ENCODE measurements at regions of chr2 and their contacts with region 1.

Region 1: GRCh38 chr2:203814661-203815540 is 52.7 kb upstream of the CTLA4 start:
- DNase-seq: peak; percentile 74
- H3K4me3 ChIP-seq: peak overlapping the region; percentile 2 to 8; a peak in 1 of 4 replicates
- H3K27ac ChIP-seq: no peak overlapping the region
- H3K4me1 ChIP-seq: peaks cover 0 to 30% of the 10 kb centered on the region in 2 experiments; a peak in 3 of 4 replicates
- H3K27me3 ChIP-seq: no peaks in the 10 kb centered on the region
- CTCF ChIP-seq: peak; percentile 84
- EP300 ChIP-seq: no peak
- RAD21 ChIP-seq: peak; percentile 96

Region 2: GRCh38 chr2:203225423-203226039 is 589.4 kb before region 1 on chr2:
- CTCF ChIA-PET with region 1: interaction called, 14 read pairs
- POLR2A ChIA-PET with region 1: no interaction called
- DNase-seq: no peak
- H3K4me3 ChIP-seq: no peak overlapping the region
- H3K27ac ChIP-seq: no peak overlapping the region
- H3K4me1 ChIP-seq: peaks cover 0 to 3% of the 10 kb centered on the region in 2 experiments; a peak in 2 of 4 replicates
- H3K27me3 ChIP-seq: no peaks in the 10 kb centered on the region
- CTCF ChIP-seq: peak; percentile 70
- EP300 ChIP-seq: no peak
- RAD21 ChIP-seq: peak; percentile 54

Region 3: DNA sequence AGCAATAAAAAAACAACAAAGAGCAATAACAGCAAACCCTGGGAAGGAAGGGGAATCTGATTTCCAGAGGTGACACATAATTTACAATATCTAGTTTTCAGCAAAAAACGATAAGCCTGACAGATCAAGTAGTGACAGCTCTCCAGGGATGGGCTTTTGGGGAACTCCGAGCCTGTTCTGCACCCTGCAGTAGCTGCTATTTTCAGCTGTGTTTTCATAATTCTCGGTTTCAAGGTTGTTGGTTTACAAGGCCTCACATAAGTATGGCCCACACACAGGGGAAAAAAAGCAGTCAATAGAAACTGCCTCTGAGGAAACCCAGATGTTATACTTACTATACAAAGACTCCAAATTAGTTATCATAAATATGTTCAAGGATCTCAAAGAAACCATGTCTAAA is 15.0 kb before region 1 on chr2:
- CTCF ChIA-PET with region 1: interaction called, 32 read pairs
- POLR2A ChIA-PET with region 1: no interaction called
- DNase-seq: no peak
- H3K4me3 ChIP-seq: no peak overlapping the region
- H3K27ac ChIP-seq: no peak overlapping the region
- H3K4me1 ChIP-seq: peaks cover 0 to 26% of the 10 kb centered on the region in 2 experiments; a peak in 2 of 4 replicates
- H3K27me3 ChIP-seq: no peaks in the 10 kb centered on the region
- CTCF ChIP-seq: no peak
- EP300 ChIP-seq: no peak
- RAD21 ChIP-seq: no peak

Region 4: GRCh38 chr2:203830304-203831055 is 15.6 kb after region 1 on chr2:
- CTCF ChIA-PET with region 1: interaction called, 11 read pairs
- POLR2A ChIA-PET with region 1: no interaction called
- DNase-seq: no peak
- H3K4me3 ChIP-seq: no peak overlapping the region
- H3K27ac ChIP-seq: no peak overlapping the region
- H3K4me1 ChIP-seq: no peaks in the 10 kb centered on the region
- H3K27me3 ChIP-seq: no peaks in the 10 kb centered on the region; the same call in 1 of the 2 replicates
- CTCF ChIP-seq: no peak
- EP300 ChIP-seq: no peak
- RAD21 ChIP-seq: no peak

Region 5: GRCh38 chr2:203918264-203918663 is 103.4 kb after region 1 on chr2:
- CTCF ChIA-PET with region 1: no interaction called
- POLR2A ChIA-PET with region 1: no interaction called
- DNase-seq: no peak
- H3K4me3 ChIP-seq: no peak overlapping the region
- H3K27ac ChIP-seq: no peak overlapping the region
- H3K4me1 ChIP-seq: no peaks in the 10 kb centered on the region; a peak in 1 of 4 replicates
- H3K27me3 ChIP-seq: no peaks in the 10 kb centered on the region; the same call in 1 of the 2 replicates
- CTCF ChIP-seq: no peak
- EP300 ChIP-seq: no peak
- RAD21 ChIP-seq: no peak

Region 6: DNA sequence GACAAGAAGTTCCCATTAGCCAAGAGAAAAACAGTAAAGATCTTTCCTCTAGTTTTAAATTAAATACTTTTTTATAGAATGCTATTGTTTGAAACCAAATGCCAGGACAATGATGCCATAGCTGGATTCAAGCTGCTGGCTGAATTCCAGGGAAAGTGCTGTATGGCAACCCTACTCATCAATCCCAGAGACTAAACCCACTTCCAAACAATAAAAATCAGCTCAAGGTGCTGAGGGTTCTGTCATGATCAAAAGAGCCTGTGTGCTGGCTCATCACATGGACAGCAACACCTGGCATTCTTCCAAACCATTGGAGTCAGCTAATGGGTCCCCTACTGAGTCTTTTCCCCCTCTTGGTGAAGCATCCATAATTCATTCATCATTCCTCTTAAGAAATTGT is 676.6 kb after region 1 on chr2:
- CTCF ChIA-PET with region 1: no interaction called
- POLR2A ChIA-PET with region 1: no interaction called
- DNase-seq: no peak
- H3K4me3 ChIP-seq: no peak overlapping the region
- H3K27ac ChIP-seq: peak overlapping the region in 1 of 2 experiments; percentile 45; a peak in 2 of 4 replicates
- H3K4me1 ChIP-seq: peaks cover 0 to 6% of the 10 kb centered on the region in 2 experiments; a peak in 2 of 4 replicates
- H3K27me3 ChIP-seq: no peaks in the 10 kb centered on the region
- CTCF ChIP-seq: no peak
- EP300 ChIP-seq: peak in 1 of 2 experiments; percentile 70; a peak in 2 of 4 replicates
- RAD21 ChIP-seq: no peak

Measured in SK-N-SH (cell line).